ENCODE measurements at regions of chr10 and their contacts with region 1.

Region 1: DNA sequence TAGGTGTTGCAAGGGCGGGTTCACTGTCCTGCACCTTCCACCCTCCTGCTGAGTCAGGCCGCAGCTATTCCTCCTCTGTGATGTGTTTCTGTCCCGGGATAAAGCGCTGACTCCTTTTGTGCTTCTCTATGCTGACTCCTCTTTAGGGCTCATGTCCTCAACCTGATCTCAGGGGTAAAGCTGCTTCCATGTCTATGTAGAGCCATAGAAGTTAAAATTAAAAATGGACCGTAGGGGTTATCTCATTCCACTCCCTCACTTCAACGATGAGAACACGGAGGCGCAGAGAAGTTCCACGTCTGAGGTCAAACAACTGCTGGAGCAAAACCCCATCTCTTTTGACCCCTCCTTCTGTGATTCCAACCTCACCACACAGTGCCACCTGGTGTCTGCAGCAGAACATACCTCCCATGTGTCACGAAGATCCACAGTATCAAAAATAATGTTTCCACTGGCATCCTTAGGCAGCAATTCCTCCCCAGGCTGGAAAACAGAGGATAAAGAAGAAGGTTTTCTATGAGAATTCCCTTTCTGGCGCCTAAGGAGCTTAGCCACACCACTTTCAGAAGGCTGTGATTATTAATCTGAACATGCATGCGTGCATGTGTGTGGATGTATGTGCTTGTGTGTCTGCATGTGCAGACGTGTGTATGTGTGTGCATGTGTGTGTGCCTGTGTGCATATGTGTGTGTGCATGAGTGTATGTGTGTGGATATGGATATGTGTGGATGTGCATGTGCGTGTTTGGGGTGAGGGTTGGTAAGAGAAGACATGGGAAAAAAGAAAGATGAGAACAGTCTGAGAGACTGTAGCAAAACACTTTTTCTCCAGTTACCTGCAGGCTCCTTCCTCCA is 81.2 kb upstream of the UCN3 start:
- DNase-seq: peak; percentile 56 to 76
- H3K4me3 ChIP-seq: peak overlapping the region; percentile 27; the same call in 1 of the 2 replicates
- H3K27ac ChIP-seq: peak overlapping the region; percentile 92
- H3K4me1 ChIP-seq: peaks cover 32% of the 10 kb centered on the region
- H3K27me3 ChIP-seq: no peaks in the 10 kb centered on the region
- CTCF ChIP-seq: peak; percentile 73

Region 2: DNA sequence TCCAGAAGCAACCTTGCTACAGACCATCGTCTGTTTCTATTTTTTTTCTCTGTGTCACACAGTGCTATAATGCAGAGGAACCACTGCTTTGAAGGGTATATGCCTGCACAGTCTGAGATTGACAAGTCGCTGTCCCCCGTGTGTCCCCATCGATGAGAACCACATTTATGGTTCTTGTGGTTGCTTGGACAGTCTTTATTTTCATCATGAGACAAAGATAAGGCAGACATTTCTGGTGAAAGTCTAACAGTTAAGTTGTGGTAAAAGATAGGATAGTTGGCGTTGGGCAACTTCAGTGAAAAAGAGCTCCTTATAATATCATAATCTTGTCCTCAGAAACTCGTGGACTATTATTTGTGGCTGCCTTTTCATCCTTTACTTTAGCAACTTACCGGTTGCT is 463.8 kb before region 1 on chr10:
- CTCF ChIA-PET with region 1: interaction called, 3 read pairs
- POLR2A ChIA-PET with region 1: no interaction called
- intact Hi-C with region 1: loop called (anchors 1 kb)
- DNase-seq: no peak
- H3K4me3 ChIP-seq: no peak overlapping the region
- H3K27ac ChIP-seq: no peak overlapping the region
- H3K4me1 ChIP-seq: no peaks in the 10 kb centered on the region; the same call in 1 of the 2 replicates
- H3K27me3 ChIP-seq: no peaks in the 10 kb centered on the region
- CTCF ChIP-seq: no peak

Region 3: GRCh38 chr10:5014936-5015335 is 268.6 kb before region 1 on chr10:
- CTCF ChIA-PET with region 1: no interaction called
- POLR2A ChIA-PET with region 1: no interaction called
- intact Hi-C with region 1: loop called (anchors 2 kb)
- DNase-seq: peak in 1 of 2 experiments; percentile 38
- H3K4me3 ChIP-seq: peak overlapping the region; percentile 49
- H3K27ac ChIP-seq: peak overlapping the region; percentile 100
- H3K4me1 ChIP-seq: peaks cover 75% of the 10 kb centered on the region
- H3K27me3 ChIP-seq: no peaks in the 10 kb centered on the region
- CTCF ChIP-seq: peak; percentile 21; the same call in 1 of the 2 replicates

Region 4: GRCh38 chr10:5094265-5095205 is 189.0 kb before region 1 on chr10 and contains the start of gene AKR1C3:
- CTCF ChIA-PET with region 1: no interaction called
- POLR2A ChIA-PET with region 1: interaction called, 4 read pairs
- intact Hi-C with region 1: loop called (anchors 1 kb)
- DNase-seq: peak; percentile 37 to 74
- H3K4me3 ChIP-seq: peak within 1 kb of the TSS; percentile 97
- H3K27ac ChIP-seq: peak within 1 kb of the TSS; percentile 99
- H3K4me1 ChIP-seq: peaks cover 34% of the 10 kb centered on the region
- H3K27me3 ChIP-seq: no peaks in the 10 kb centered on the region; the same call in 1 of the 2 replicates
- CTCF ChIP-seq: peak; percentile 81
- total RNA-seq, gene AKR1C3: 1,870 and 1,886 TPM in 2 replicates

Region 5: GRCh38 chr10:5385224-5385623 is 101.7 kb after region 1 on chr10:
- CTCF ChIA-PET with region 1: interaction called, 14 read pairs
- POLR2A ChIA-PET with region 1: no interaction called
- intact Hi-C with region 1: loop called (anchors 5 kb)
- DNase-seq: no peak
- H3K4me3 ChIP-seq: no peak overlapping the region
- H3K27ac ChIP-seq: no peak overlapping the region
- H3K4me1 ChIP-seq: no peaks in the 10 kb centered on the region
- H3K27me3 ChIP-seq: no peaks in the 10 kb centered on the region
- CTCF ChIP-seq: no peak

Region 6: GRCh38 chr10:5813287-5814109 is 530.0 kb after region 1 on chr10 and contains the start of gene GDI2:
- CTCF ChIA-PET with region 1: no interaction called
- POLR2A ChIA-PET with region 1: interaction called, 23 read pairs
- intact Hi-C with region 1: no loop called
- DNase-seq: peak; percentile 81 to 96
- H3K4me3 ChIP-seq: peak within 1 kb of the TSS; percentile 99
- H3K27ac ChIP-seq: peak within 1 kb of the TSS; percentile 94
- H3K4me1 ChIP-seq: peaks cover 25% of the 10 kb centered on the region
- H3K27me3 ChIP-seq: no peaks in the 10 kb centered on the region
- CTCF ChIP-seq: no peak
- total RNA-seq, gene GDI2: 152 and 196 TPM in 2 replicates

Measured in PC-9 (cell line).